ENCODE measurements at regions of chr4 and their contacts with region 1.

Region 1: GRCh38 chr4:75849461-75849860 is 52.8 kb downstream of the PPEF2 start:
- DNase-seq: no peak
- ATAC-seq: no peak
- H3K4me3 ChIP-seq: no peak overlapping the region
- H3K4me3 Mint-ChIP-seq: no peak overlapping the region
- H3K27ac ChIP-seq: no peak overlapping the region
- H3K27ac Mint-ChIP-seq: no peak overlapping the region
- H3K4me1 ChIP-seq: no peaks in the 10 kb centered on the region
- H3K4me1 Mint-ChIP-seq: peaks cover 6% of the 10 kb centered on the region
- H3K27me3 ChIP-seq: peaks cover 0 to 3% (median 0%) of the 10 kb centered on the region in 4 experiments
- H3K27me3 Mint-ChIP-seq: peaks cover 12% of the 10 kb centered on the region
- CTCF ChIP-seq: no peak

Region 2: GRCh38 chr4:74948236-74948635 is 901.2 kb before region 1 on chr4:
- CTCF ChIA-PET with region 1: no interaction called
- POLR2A ChIA-PET with region 1: no interaction called
- intact Hi-C with region 1: no loop called
- DNase-seq: no peak
- ATAC-seq: no peak
- H3K4me3 ChIP-seq: no peak overlapping the region
- H3K4me3 Mint-ChIP-seq: no peak overlapping the region
- H3K27ac ChIP-seq: no peak overlapping the region
- H3K27ac Mint-ChIP-seq: no peak overlapping the region
- H3K4me1 ChIP-seq: no peaks in the 10 kb centered on the region
- H3K4me1 Mint-ChIP-seq: peaks cover 7% of the 10 kb centered on the region
- H3K27me3 ChIP-seq: no peaks in the 10 kb centered on the region
- H3K27me3 Mint-ChIP-seq: no peaks in the 10 kb centered on the region
- CTCF ChIP-seq: no peak

Region 3: GRCh38 chr4:75429208-75429607 is 420.3 kb before region 1 on chr4:
- CTCF ChIA-PET with region 1: no interaction called
- POLR2A ChIA-PET with region 1: no interaction called
- intact Hi-C with region 1: no loop called
- DNase-seq: no peak
- ATAC-seq: no peak
- H3K4me3 ChIP-seq: no peak overlapping the region
- H3K4me3 Mint-ChIP-seq: no peak overlapping the region
- H3K27ac ChIP-seq: no peak overlapping the region
- H3K27ac Mint-ChIP-seq: no peak overlapping the region
- H3K4me1 ChIP-seq: no peaks in the 10 kb centered on the region
- H3K4me1 Mint-ChIP-seq: no peaks in the 10 kb centered on the region
- H3K27me3 ChIP-seq: peaks cover 0 to 4% (median 1%) of the 10 kb centered on the region in 4 experiments
- H3K27me3 Mint-ChIP-seq: peaks cover 25% of the 10 kb centered on the region
- CTCF ChIP-seq: no peak

Region 4: GRCh38 chr4:75565481-75565880 is 284.0 kb before region 1 on chr4:
- CTCF ChIA-PET with region 1: interaction called, 22 read pairs
- POLR2A ChIA-PET with region 1: no interaction called
- intact Hi-C with region 1: no loop called
- DNase-seq: no peak
- ATAC-seq: no peak
- H3K4me3 ChIP-seq: no peak overlapping the region
- H3K4me3 Mint-ChIP-seq: no peak overlapping the region
- H3K27ac ChIP-seq: no peak overlapping the region
- H3K27ac Mint-ChIP-seq: no peak overlapping the region
- H3K4me1 ChIP-seq: peaks cover 0 to 4% of the 10 kb centered on the region in 2 donors
- H3K4me1 Mint-ChIP-seq: peaks cover 5% of the 10 kb centered on the region
- H3K27me3 ChIP-seq: no peaks in the 10 kb centered on the region
- H3K27me3 Mint-ChIP-seq: peaks cover 18% of the 10 kb centered on the region
- CTCF ChIP-seq: no peak

Region 5: GRCh38 chr4:75708218-75708691 is 141.2 kb before region 1 on chr4:
- CTCF ChIA-PET with region 1: interaction called, 3 read pairs
- POLR2A ChIA-PET with region 1: no interaction called
- intact Hi-C with region 1: loop called (anchors 5 kb)
- DNase-seq: peak; percentile 65
- ATAC-seq: peak; percentile 82
- H3K4me3 ChIP-seq: no peak overlapping the region
- H3K4me3 Mint-ChIP-seq: peak overlapping the region; percentile 19
- H3K27ac ChIP-seq: no peak overlapping the region
- H3K27ac Mint-ChIP-seq: peak overlapping the region; percentile 43
- H3K4me1 ChIP-seq: peaks cover 7 to 10% of the 10 kb centered on the region in 2 donors
- H3K4me1 Mint-ChIP-seq: peaks cover 14% of the 10 kb centered on the region
- H3K27me3 ChIP-seq: no peaks in the 10 kb centered on the region
- H3K27me3 Mint-ChIP-seq: no peaks in the 10 kb centered on the region
- CTCF ChIP-seq: peak; percentile 72

Region 6: DNA sequence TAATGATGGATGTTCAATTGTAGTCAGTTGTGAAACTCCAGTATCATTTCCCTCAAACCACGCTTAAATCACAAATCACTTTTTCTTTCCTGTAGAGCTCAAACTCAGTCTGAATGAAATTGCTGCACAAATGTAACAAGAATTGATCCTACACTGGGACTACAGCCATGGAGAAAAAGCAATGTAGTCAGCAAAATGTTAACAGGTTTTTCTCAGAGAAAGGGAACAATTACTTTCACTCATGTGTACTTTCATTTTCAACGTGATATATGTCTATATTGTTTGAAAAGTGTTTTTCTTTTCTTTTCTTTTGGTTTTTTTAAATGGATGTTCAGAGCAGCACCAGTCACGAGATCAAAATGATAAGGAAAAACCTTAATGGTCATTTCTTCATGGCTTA is 118.6 kb after region 1 on chr4:
- CTCF ChIA-PET with region 1: no interaction called
- POLR2A ChIA-PET with region 1: no interaction called
- intact Hi-C with region 1: no loop called
- DNase-seq: no peak
- ATAC-seq: no peak
- H3K4me3 ChIP-seq: no peak overlapping the region
- H3K4me3 Mint-ChIP-seq: no peak overlapping the region
- H3K27ac ChIP-seq: no peak overlapping the region
- H3K27ac Mint-ChIP-seq: no peak overlapping the region
- H3K4me1 ChIP-seq: no peaks in the 10 kb centered on the region
- H3K4me1 Mint-ChIP-seq: no peaks in the 10 kb centered on the region
- H3K27me3 ChIP-seq: no peaks in the 10 kb centered on the region
- H3K27me3 Mint-ChIP-seq: no peaks in the 10 kb centered on the region
- CTCF ChIP-seq: no peak

Region 7: GRCh38 chr4:76624241-76624681 is 774.8 kb after region 1 on chr4:
- CTCF ChIA-PET with region 1: no interaction called
- POLR2A ChIA-PET with region 1: no interaction called
- intact Hi-C with region 1: no loop called
- DNase-seq: no peak
- ATAC-seq: no peak
- H3K4me3 ChIP-seq: no peak overlapping the region
- H3K4me3 Mint-ChIP-seq: no peak overlapping the region
- H3K27ac ChIP-seq: no peak overlapping the region
- H3K27ac Mint-ChIP-seq: no peak overlapping the region
- H3K4me1 ChIP-seq: no peaks in the 10 kb centered on the region
- H3K4me1 Mint-ChIP-seq: no peaks in the 10 kb centered on the region
- H3K27me3 ChIP-seq: peaks cover 0 to 3% (median 0%) of the 10 kb centered on the region in 4 experiments
- H3K27me3 Mint-ChIP-seq: peaks cover 15% of the 10 kb centered on the region
- CTCF ChIP-seq: no peak

Measured in B cell (primary cell).